Caco-2 (cell line): ENCODE measurements at regions of chr12 and their contacts with region 1.

Region 1: GRCh38 chr12:64173456-64173855 is 48.6 kb downstream of the KICS2 start:
- DNase-seq: peak; percentile 79 to 88
- H3K4me3 ChIP-seq: no peak overlapping the region
- H3K4me3 Mint-ChIP-seq: peak overlapping the region; percentile 3
- H3K27ac Mint-ChIP-seq: peak overlapping the region; percentile 62
- H3K4me1 ChIP-seq: peaks cover 52% of the 10 kb centered on the region
- H3K4me1 Mint-ChIP-seq: peaks cover 28% of the 10 kb centered on the region
- H3K27me3 ChIP-seq: no peaks in the 10 kb centered on the region
- H3K27me3 Mint-ChIP-seq: no peaks in the 10 kb centered on the region
- CTCF ChIP-seq: no peak

Region 2: GRCh38 chr12:63955831-63956609 is 217.4 kb before region 1 on chr12:
- CTCF ChIA-PET with region 1: no interaction called
- POLR2A ChIA-PET with region 1: interaction called, 13 read pairs
- intact Hi-C with region 1: no loop called
- DNase-seq: no peak
- H3K4me3 ChIP-seq: no peak overlapping the region
- H3K4me3 Mint-ChIP-seq: no peak overlapping the region
- H3K27ac Mint-ChIP-seq: no peak overlapping the region
- H3K4me1 ChIP-seq: no peaks in the 10 kb centered on the region
- H3K4me1 Mint-ChIP-seq: no peaks in the 10 kb centered on the region
- H3K27me3 ChIP-seq: no peaks in the 10 kb centered on the region
- H3K27me3 Mint-ChIP-seq: no peaks in the 10 kb centered on the region
- CTCF ChIP-seq: no peak